PC-9 (cell line): ENCODE measurements at regions of chr9 and their contacts with region 1.

Region 1: DNA sequence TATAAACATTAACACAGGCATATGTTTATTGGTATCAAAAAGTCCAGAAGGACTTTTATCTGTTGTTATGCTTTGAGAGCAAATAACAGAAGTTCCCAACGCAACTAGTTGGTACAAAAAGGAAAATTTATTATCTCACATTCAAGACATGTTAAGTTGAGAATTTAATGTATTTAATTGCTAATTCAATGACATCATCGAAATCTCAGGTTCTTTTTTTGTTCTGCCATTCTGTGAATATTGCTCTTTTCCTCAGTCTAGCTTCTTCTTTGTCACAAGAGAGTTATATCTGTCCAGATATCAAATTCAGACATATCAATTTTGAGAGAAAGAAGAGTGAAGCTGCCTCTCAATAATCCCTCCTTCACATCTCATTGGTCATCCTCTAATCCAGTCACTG is 307.6 kb upstream of the PCSK5 start:
- DNase-seq: no peak
- H3K4me3 ChIP-seq: no peak overlapping the region
- H3K27ac ChIP-seq: no peak overlapping the region
- H3K4me1 ChIP-seq: no peaks in the 10 kb centered on the region
- H3K27me3 ChIP-seq: no peaks in the 10 kb centered on the region
- CTCF ChIP-seq: no peak

Region 2: DNA sequence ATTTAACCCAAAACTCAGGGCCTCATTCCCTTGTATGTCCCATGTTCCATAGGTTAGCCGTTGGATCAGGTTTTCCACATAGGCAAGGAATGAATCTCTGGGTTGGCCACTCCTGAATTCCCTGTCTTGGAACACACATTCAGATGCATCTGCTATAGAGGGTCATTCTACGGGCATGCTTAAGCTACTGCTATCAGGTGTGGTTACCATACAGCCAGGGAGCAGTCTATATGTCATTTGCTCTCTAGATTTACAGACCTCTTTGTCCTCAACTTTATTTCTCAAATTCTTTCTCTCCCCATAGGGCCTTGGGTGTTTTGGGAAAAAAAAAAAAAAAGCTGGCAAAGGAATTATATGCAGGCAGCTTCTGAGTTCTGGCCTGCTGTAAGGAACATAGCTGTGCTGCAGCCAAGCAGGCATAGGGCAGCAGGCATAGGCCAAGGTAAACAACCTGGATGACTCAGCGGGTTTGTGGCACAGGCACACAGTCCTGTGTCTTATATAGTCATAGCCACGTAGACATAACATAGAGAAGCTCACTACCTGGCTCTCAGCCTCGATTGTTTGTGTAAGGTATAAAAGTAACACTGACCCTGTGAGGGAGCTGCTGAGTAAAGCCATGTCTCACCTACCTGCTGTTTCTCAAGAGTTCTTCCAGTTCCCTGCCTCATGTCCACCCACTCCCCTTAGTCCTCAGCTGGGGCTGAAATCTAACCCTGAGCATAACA is 353.1 kb before region 1 on chr9:
- CTCF ChIA-PET with region 1: no interaction called
- POLR2A ChIA-PET with region 1: interaction called, 22 read pairs
- intact Hi-C with region 1: no loop called
- DNase-seq: peak; percentile 75 to 94
- H3K4me3 ChIP-seq: no peak overlapping the region
- H3K27ac ChIP-seq: peak overlapping the region; percentile 82
- H3K4me1 ChIP-seq: peaks cover 45% of the 10 kb centered on the region
- H3K27me3 ChIP-seq: no peaks in the 10 kb centered on the region
- CTCF ChIP-seq: no peak; the same call in 1 of the 2 replicates

Region 3: GRCh38 chr9:75467142-75467541 is 115.7 kb before region 1 on chr9:
- CTCF ChIA-PET with region 1: no interaction called
- POLR2A ChIA-PET with region 1: no interaction called
- intact Hi-C with region 1: no loop called
- DNase-seq: no peak
- H3K4me3 ChIP-seq: no peak overlapping the region
- H3K27ac ChIP-seq: no peak overlapping the region
- H3K4me1 ChIP-seq: no peaks in the 10 kb centered on the region
- H3K27me3 ChIP-seq: 0 out of 2 replicates have a peak, but pooled peaks cover 5% of the 10 kb centered on the region
- CTCF ChIP-seq: no peak